ENCODE measurements at regions of chr22 and their contacts with region 1.

Region 1: DNA sequence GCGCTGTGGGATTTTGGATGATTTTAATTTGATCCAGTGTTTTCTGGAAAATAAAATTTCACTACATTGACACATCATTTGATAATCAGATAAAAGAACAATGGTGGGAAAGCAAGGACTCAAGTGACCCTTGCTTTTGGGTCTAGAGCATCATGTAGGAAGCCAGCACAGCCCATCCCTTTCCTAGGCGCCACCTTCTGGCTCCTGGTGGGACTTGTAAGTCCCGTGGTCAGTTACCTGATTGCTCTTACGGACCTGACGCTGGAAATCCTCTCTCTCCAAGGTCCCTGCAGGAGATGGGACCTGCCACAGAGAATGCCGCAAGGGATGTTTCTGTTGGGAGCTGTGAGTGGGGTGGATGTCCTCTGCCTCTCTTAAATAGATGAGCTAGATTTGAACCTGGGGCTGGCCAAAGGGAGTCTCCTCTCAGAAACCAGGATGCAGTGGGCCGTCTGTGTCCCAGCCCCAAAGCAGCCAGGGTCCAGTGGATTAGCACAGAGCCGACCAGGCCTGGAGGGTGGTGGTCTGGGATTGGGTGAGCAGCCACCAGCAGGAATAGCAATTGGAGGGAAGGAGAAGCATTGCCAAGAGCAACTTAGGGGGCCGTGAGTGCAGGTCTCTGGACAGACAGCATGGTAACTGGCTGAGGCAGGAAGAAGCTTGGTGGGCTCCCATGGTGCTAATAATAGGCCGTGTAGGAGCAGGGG is 21.7 kb downstream of the TIMP3 start:
- DNase-seq: peak; percentile 44
- ATAC-seq: peak; percentile 12; the same call in 1 of the 2 replicates
- H3K4me3 ChIP-seq: no peak overlapping the region
- H3K27ac ChIP-seq: no peak overlapping the region
- H3K4me1 ChIP-seq: no peaks in the 10 kb centered on the region; the same call in 1 of the 2 replicates
- H3K27me3 ChIP-seq: no peaks in the 10 kb centered on the region
- CTCF ChIP-seq: peak; percentile 38
- POLR2A ChIP-seq: no peak
- RAD21 ChIP-seq: peak; percentile 51

Region 2: GRCh38 chr22:32389685-32390084 is 433.5 kb before region 1 on chr22:
- CTCF ChIA-PET with region 1: no interaction called
- POLR2A ChIA-PET with region 1: no interaction called
- dilution Hi-C with region 1: no loop called
- in situ Hi-C with region 1: loop called (anchors 10 kb)
- intact Hi-C with region 1: no loop called
- DNase-seq: peak; percentile 11
- ATAC-seq: no peak
- H3K4me3 ChIP-seq: no peak overlapping the region
- H3K27ac ChIP-seq: no peak overlapping the region
- H3K4me1 ChIP-seq: no peaks in the 10 kb centered on the region
- H3K27me3 ChIP-seq: no peaks in the 10 kb centered on the region
- CTCF ChIP-seq: peak; percentile 39
- POLR2A ChIP-seq: no peak
- RAD21 ChIP-seq: peak; percentile 14; the same call in 1 of the 2 replicates

Region 3: GRCh38 chr22:32880893-32881596 is 57.9 kb after region 1 on chr22:
- CTCF ChIA-PET with region 1: no interaction called
- POLR2A ChIA-PET with region 1: no interaction called
- dilution Hi-C with region 1: no loop called
- in situ Hi-C with region 1: no loop called
- intact Hi-C with region 1: loop called (anchors 10 kb)
- DNase-seq: peak; percentile 73
- ATAC-seq: peak; percentile 93
- H3K4me3 ChIP-seq: no peak overlapping the region
- H3K27ac ChIP-seq: no peak overlapping the region
- H3K4me1 ChIP-seq: peaks cover 2% of the 10 kb centered on the region; the same call in 1 of the 2 replicates
- H3K27me3 ChIP-seq: peaks cover 36% of the 10 kb centered on the region
- CTCF ChIP-seq: no peak
- POLR2A ChIP-seq: no peak
- RAD21 ChIP-seq: no peak

Measured in IMR-90 (cell line).